ENCODE measurements at regions of chr13 and their contacts with region 1.

Region 1: DNA sequence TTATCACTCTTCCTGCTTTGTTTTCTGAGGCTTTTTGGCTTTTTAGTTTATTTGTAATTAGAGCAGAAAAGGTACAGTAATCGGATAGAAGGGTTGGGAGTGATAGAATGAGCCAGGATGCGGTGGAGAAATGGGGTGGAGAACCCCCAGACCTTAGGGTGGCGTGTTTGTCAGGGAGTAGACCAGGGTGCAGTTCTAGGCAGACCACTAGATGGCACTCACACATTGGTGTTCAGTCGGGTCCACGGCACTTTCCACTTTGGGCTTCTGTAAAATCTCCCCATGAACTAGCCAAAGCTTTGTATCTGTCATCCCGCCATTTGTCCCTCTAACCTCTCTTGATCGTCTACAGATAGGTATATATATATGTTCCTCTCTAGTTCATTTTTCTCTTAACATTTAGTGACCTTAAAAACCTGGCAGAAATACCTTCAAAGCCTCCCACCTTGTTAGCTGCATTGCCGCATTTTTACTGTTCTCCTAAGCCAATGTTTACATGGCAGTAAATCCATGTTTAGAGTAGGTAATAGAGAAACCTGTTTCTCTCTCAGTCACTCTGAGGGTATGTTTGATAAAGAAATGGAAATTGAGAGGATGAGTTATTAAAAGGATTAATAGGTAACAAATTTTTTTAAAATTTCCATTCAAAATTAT is 154.9 kb downstream of the TM9SF2 start:
- DNase-seq: peak; percentile 58 to 84 (median 80)
- ATAC-seq: peak; percentile 89
- H3K4me3 ChIP-seq: peak overlapping the region; percentile 47
- H3K4me3 Mint-ChIP-seq: peak overlapping the region; percentile 73 to 90 (median 81)
- H3K27ac ChIP-seq: peak overlapping the region; percentile 82
- H3K27ac Mint-ChIP-seq: peak overlapping the region; percentile 47 to 98 (median 92)
- H3K4me1 ChIP-seq: peaks cover 39 to 41% of the 10 kb centered on the region in 2 donors
- H3K4me1 Mint-ChIP-seq: peaks cover 14 to 54% (median 45%) of the 10 kb centered on the region in 7 donors
- H3K27me3 ChIP-seq: no peaks in the 10 kb centered on the region
- H3K27me3 Mint-ChIP-seq: peaks cover 0 to 27% (median 0%) of the 10 kb centered on the region in 5 donors

Region 2: DNA sequence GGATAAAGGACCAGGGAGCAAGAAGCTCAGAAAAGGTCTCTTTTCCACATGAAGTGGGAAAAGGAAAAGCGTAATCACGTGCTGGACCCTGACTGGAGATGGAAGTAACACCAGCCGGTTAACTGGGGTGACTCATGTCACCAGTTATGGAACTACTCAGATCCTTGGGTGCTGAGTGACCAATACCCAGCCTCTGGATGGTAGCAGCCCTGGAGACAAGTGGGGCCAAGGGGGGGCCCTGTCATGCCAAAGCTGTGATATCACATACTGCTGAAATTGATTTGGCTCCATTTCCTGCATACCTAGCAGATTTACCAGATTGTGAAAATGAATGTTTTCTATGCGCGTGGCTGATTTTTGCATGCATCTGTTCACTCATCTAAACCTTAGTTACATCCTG is 156.4 kb after region 1 on chr13:
- CTCF ChIA-PET with region 1: interaction called, 18 read pairs
- POLR2A ChIA-PET with region 1: interaction called, 26 read pairs
- intact Hi-C with region 1: no loop called
- DNase-seq: no peak
- ATAC-seq: no peak
- H3K4me3 ChIP-seq: no peak overlapping the region
- H3K4me3 Mint-ChIP-seq: no peak overlapping the region
- H3K27ac ChIP-seq: no peak overlapping the region
- H3K27ac Mint-ChIP-seq: no peak overlapping the region
- H3K4me1 ChIP-seq: peaks cover under 1 to 2% of the 10 kb centered on the region in 2 donors
- H3K4me1 Mint-ChIP-seq: peaks cover 3 to 15% (median 11%) of the 10 kb centered on the region in 7 donors
- H3K27me3 ChIP-seq: no peaks in the 10 kb centered on the region
- H3K27me3 Mint-ChIP-seq: peaks cover 0 to 3% (median 0%) of the 10 kb centered on the region in 5 donors

Region 3: DNA sequence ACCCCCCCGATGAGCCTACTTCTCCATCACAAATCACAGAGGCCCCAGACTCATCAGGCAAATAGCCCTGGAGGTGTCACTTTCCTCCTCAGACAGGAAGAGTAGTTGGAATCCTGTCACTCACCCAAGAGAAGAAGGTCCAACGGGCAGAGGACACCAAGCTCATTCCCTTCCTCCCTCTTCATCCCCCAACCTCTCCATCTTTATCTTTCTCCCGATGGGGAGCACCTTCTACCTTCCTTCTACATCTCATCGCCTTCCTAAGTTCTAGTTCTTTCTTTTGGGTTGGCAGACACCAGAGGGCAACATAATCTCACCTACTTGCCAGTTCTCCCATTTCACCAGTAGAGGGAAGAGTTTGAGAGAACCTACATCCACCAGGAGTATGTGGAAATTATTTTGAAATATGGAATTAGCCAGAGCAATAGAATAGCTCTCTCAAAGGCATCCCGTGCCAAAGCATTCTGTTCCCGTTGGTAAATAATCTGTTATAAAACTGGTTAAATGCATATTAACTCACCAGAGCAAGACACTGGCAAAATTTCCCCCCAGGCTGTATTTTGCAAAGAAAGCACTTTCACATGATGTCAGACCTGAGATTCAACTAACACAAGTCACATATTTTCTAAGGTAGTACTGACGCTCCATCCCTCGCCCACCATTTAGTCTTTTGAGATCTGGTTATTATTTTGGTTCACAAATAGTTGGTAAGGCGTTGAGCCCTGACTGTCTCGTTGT is 260.3 kb after region 1 on chr13:
- CTCF ChIA-PET with region 1: interaction called, 38 read pairs
- POLR2A ChIA-PET with region 1: no interaction called
- intact Hi-C with region 1: loop called (anchors 1 kb)
- DNase-seq: peak in 6 of 9 donors; percentile 18 to 62 (median 50)
- ATAC-seq: peak; percentile 85
- H3K4me3 ChIP-seq: no peak overlapping the region
- H3K4me3 Mint-ChIP-seq: no peak overlapping the region
- H3K27ac ChIP-seq: no peak overlapping the region
- H3K27ac Mint-ChIP-seq: peak overlapping the region in 1 of 9 donors; percentile 3
- H3K4me1 ChIP-seq: peaks cover 0 to 8% of the 10 kb centered on the region in 2 donors
- H3K4me1 Mint-ChIP-seq: peaks cover 5 to 31% (median 7%) of the 10 kb centered on the region in 7 donors
- H3K27me3 ChIP-seq: no peaks in the 10 kb centered on the region
- H3K27me3 Mint-ChIP-seq: peaks cover 3 to 21% (median 5%) of the 10 kb centered on the region in 5 donors

Region 4: GRCh38 chr13:100235311-100235901 is 579.2 kb after region 1 on chr13:
- CTCF ChIA-PET with region 1: interaction called, 68 read pairs
- POLR2A ChIA-PET with region 1: interaction called, 6 read pairs
- intact Hi-C with region 1: loop called (anchors 1 kb)
- DNase-seq: peak in 7 of 9 donors; percentile 11 to 54 (median 40)
- ATAC-seq: peak; percentile 57
- H3K4me3 ChIP-seq: no peak overlapping the region
- H3K4me3 Mint-ChIP-seq: peak overlapping the region in 1 of 10 donors; percentile 30
- H3K27ac ChIP-seq: no peak overlapping the region
- H3K27ac Mint-ChIP-seq: no peak overlapping the region
- H3K4me1 ChIP-seq: peaks cover 0 to 5% of the 10 kb centered on the region in 2 donors
- H3K4me1 Mint-ChIP-seq: peaks cover 3 to 8% (median 5%) of the 10 kb centered on the region in 7 donors
- H3K27me3 ChIP-seq: no peaks in the 10 kb centered on the region
- H3K27me3 Mint-ChIP-seq: peaks cover 0 to 3% (median 0%) of the 10 kb centered on the region in 5 donors

Region 5: DNA sequence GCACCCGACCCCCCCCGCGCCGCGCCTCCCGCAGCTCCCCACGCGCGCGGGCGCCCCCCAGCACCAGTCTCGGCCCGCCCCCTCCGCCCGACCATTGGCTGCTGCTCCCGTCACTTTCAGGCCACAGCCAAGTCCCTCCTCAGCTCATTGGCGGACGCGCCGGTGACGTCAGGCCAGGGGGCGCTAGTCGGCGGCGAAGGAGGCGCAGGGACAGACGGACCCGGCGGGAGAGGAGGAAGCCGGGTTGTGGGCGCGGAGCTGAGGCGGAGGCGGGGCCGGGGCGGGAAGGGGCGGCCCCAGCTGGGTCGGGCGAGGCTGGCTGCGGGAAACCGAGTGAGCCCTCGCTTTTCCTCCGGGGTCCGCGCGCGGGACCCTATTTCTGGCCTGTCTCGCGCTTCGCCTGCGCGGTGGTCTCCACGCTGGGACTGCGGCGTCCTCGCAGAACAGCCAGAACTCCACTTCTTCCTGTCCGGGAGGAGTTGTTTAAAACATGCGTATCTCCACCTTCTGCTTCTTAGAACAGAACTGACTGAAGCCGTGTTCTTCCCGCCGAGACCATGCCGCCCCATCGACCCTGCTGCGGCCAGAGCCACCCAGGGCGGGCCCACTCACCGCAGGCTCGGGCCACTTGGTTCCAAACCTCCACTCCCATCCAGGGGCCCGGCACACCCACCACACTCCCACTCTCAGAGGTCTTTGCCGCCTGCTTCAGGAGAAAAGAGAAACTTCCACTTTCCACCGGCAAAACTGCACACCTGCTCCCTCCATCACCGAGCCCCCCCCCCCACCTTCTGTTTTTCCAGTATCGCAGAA is 1018.8 kb after region 1 on chr13:
- CTCF ChIA-PET with region 1: no interaction called
- POLR2A ChIA-PET with region 1: interaction called, 12 read pairs
- intact Hi-C with region 1: loop called (anchors 1 to 2 kb)
- DNase-seq: peak; percentile 97 to 100 (median 99)
- ATAC-seq: peak; percentile 96
- H3K4me3 ChIP-seq: peak overlapping the region; percentile 93
- H3K4me3 Mint-ChIP-seq: peak overlapping the region; percentile 86 to 95 (median 90)
- H3K27ac ChIP-seq: peak overlapping the region; percentile 84
- H3K27ac Mint-ChIP-seq: peak overlapping the region; percentile 64 to 91 (median 86)
- H3K4me1 ChIP-seq: peaks cover 7 to 9% of the 10 kb centered on the region in 2 donors
- H3K4me1 Mint-ChIP-seq: peaks cover 17 to 38% (median 30%) of the 10 kb centered on the region in 7 donors
- H3K27me3 ChIP-seq: no peaks in the 10 kb centered on the region
- H3K27me3 Mint-ChIP-seq: peaks cover 0 to 20% (median 0%) of the 10 kb centered on the region in 5 donors

Measured in naive thymus-derived CD4-positive, alpha-beta T cell (primary cell).